ENCODE measurements at regions of chr3 and their contacts with region 1.

Region 1: GRCh38 chr3:51995346-51996163 is at the start of gene RPL29:
- DNase-seq: peak; percentile 63
- H3K4me3 ChIP-seq: peak within 1 kb of the TSS; percentile 92
- CTCF ChIP-seq: no peak

Region 2: DNA sequence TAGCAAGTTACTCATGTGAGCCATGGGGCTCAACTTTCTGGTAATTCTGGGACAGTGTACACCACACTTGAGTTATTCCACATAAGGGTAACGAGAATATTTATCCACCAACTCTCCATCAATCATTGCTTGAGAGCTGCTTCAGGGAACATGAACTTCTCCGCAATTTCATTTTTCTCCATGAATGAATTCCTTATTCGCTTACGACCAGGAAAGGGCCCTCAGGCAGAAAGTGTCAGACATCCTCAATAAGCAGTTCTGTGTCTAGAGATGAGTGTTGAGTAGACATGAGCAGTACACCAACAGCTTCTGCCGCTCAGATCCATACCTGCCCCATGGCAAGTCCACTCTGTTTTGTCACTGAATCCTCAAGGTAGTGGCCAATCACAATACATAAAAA is 158.9 kb before region 1 on chr3:
- CTCF ChIA-PET with region 1: no interaction called
- POLR2A ChIA-PET with region 1: no interaction called
- DNase-seq: no peak
- H3K4me3 ChIP-seq: no peak overlapping the region
- CTCF ChIP-seq: no peak

Region 3: GRCh38 chr3:51974963-51975851 is 20.3 kb before region 1 on chr3 and contains the start of gene ABHD14A:
- CTCF ChIA-PET with region 1: interaction called, 20 read pairs
- POLR2A ChIA-PET with region 1: interaction called, 4 read pairs
- DNase-seq: no peak
- H3K4me3 ChIP-seq: peak within 1 kb of the TSS; percentile 89
- CTCF ChIP-seq: no peak

Region 4: GRCh38 chr3:51982782-51983577 is 12.6 kb before region 1 on chr3 and contains the start of gene ACY1:
- CTCF ChIA-PET with region 1: interaction called, 33 read pairs
- POLR2A ChIA-PET with region 1: interaction called, 35 read pairs
- DNase-seq: no peak
- H3K4me3 ChIP-seq: peak within 1 kb of the TSS; percentile 71
- CTCF ChIP-seq: no peak

Region 5: DNA sequence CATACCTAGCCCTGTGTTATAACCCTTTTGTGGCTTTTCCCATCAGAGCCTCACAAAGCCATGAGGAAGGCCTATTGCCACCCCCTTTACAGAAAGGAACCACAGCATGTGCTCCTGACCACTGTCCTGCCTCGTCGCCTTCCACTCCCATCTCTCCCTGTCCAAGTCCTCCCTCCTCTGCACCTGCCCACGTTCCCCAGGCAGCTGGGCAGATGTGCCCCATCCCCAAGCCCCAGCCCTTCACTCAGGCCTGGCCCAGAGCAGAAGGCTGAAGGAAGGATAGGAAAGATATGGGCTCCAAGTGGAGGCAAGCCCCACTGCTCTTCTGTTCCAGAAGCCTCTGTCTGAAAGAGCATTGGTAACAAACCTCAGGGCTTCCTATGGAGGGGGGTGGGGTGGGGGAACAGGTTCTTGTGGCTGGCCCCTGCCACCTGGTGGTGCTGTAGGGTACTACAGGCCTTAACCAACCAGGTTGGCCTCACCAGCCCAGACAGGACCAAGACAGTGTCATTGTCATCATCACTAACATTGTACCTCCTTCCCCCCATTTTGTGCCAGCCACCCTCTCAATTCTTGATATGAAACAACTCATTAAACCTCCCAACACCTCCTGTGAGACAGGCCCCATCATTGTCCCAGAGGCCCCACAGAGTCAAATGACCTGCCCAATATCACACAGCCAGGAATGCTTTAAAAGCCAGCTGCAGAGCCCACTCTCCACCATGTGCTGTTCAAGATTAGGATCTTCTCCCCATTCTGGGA is 148.7 kb after region 1 on chr3:
- CTCF ChIA-PET with region 1: interaction called, 725 read pairs
- POLR2A ChIA-PET with region 1: interaction called, 4 read pairs
- DNase-seq: peak; percentile 41
- H3K4me3 ChIP-seq: no peak overlapping the region
- CTCF ChIP-seq: peak; percentile 95

Region 6: GRCh38 chr3:52154117-52155094 is 158.9 kb after region 1 on chr3 and contains the start of gene POC1A:
- CTCF ChIA-PET with region 1: interaction called, 725 read pairs
- POLR2A ChIA-PET with region 1: interaction called, 11 read pairs
- DNase-seq: peak; percentile 91
- H3K4me3 ChIP-seq: peak within 1 kb of the TSS; percentile 90
- CTCF ChIP-seq: no peak